ENCODE measurements at regions of chr3 and their contacts with region 1.

Region 1: GRCh38 chr3:54999159-54999558 is 71.3 kb upstream of the LRTM1 start:
- DNase-seq: peak; percentile 78
- H3K4me3 ChIP-seq: no peak overlapping the region
- CTCF ChIP-seq: peak; percentile 58

Region 2: GRCh38 chr3:55013145-55013925 is 14.2 kb after region 1 on chr3:
- CTCF ChIA-PET with region 1: interaction called, 26 read pairs
- POLR2A ChIA-PET with region 1: no interaction called
- DNase-seq: no peak
- H3K4me3 ChIP-seq: no peak overlapping the region
- CTCF ChIP-seq: peak; percentile 35